ENCODE measurements at regions of chr13 and their contacts with region 1.

Region 1: DNA sequence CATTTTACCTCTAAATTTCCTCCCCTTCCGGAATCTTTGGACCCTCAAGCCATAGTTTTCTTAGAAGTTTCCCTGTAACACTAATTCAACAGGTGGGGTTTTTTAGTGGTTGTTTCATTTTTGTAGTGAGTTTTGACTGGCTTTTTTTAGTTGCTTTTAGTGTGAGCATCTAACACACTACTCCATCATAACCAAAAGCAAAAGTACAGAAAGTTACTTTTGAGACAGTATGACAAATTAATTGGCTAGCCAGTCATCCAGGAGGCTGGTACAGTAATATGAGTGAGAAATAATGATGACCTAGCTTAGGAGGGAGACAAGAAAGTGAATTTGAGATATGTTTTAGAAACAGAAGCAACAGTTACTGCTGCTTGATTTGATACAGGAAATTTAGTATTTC is 71.5 kb downstream of the DNAJC15 start:
- DNase-seq: no peak
- H3K4me3 ChIP-seq: no peak overlapping the region
- H3K27ac ChIP-seq: no peak overlapping the region
- H3K4me1 ChIP-seq: no peaks in the 10 kb centered on the region
- H3K27me3 ChIP-seq: no peaks in the 10 kb centered on the region
- CTCF ChIP-seq: no peak
- EP300 ChIP-seq: no peak
- POLR2A ChIP-seq: no peak
- RAD21 ChIP-seq: no peak

Region 2: DNA sequence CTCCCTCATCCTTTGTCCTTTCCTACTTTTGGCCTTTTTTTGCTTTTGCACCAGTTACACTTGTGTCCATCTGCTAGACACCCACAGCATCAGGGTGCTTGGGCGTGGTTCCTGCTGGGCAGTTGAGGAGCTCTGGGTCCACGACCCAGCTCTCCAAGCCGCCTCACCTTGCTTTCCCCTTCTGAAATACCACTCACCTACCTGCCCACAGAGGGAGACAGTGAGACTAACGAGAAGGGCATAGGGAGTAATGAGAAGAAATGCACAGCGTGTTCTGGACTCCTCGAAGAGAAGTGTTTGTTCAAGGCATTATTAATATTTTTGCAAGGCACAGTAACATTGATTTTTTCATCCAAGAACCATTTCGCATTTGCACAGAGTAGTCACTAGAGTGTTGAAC is 21.3 kb after region 1 on chr13:
- CTCF ChIA-PET with region 1: interaction called, 14 read pairs
- POLR2A ChIA-PET with region 1: no interaction called
- DNase-seq: no peak
- H3K4me3 ChIP-seq: no peak overlapping the region
- H3K27ac ChIP-seq: no peak overlapping the region
- H3K4me1 ChIP-seq: peaks cover 0 to 2% (median 0%) of the 10 kb centered on the region in 4 experiments; a peak in 1 of 7 replicates
- H3K27me3 ChIP-seq: no peaks in the 10 kb centered on the region
- CTCF ChIP-seq: peak; percentile 26 to 58 (median 42)
- EP300 ChIP-seq: no peak
- POLR2A ChIP-seq: no peak
- RAD21 ChIP-seq: peak; percentile 39 to 59

Measured in H1 (cell line).